ENCODE measurements at regions of chr20 and their contacts with region 1.

Region 1: DNA sequence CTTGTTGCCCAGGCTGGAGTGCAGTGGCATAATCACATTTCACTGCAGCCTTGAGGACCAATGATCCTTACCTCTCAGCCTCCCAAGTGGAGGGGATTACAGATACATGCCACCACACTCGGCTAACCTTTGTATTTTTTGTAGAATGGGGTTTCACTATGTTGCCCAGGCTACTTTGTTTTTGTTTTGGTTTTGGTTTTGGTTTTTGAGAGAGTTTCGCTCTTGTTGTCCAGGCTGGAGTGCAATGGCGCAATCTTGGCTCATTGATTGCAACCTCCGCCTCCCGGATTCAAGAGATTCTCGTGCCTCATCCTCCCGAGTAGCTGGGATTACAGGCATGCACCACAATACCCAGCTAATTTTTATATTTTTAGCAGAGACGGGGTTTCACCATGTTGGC is 105.5 kb downstream of the BMP7 start:
- DNase-seq: no peak
- ATAC-seq: no peak
- H3K4me3 ChIP-seq: no peak overlapping the region
- H3K4me3 Mint-ChIP-seq: no peak overlapping the region
- H3K27ac ChIP-seq: no peak overlapping the region
- H3K27ac Mint-ChIP-seq: no peak overlapping the region
- H3K4me1 ChIP-seq: no peaks in the 10 kb centered on the region
- H3K4me1 Mint-ChIP-seq: no peaks in the 10 kb centered on the region
- H3K27me3 ChIP-seq: no peaks in the 10 kb centered on the region
- H3K27me3 Mint-ChIP-seq: peaks cover 15% of the 10 kb centered on the region
- CTCF ChIP-seq: no peak

Region 2: DNA sequence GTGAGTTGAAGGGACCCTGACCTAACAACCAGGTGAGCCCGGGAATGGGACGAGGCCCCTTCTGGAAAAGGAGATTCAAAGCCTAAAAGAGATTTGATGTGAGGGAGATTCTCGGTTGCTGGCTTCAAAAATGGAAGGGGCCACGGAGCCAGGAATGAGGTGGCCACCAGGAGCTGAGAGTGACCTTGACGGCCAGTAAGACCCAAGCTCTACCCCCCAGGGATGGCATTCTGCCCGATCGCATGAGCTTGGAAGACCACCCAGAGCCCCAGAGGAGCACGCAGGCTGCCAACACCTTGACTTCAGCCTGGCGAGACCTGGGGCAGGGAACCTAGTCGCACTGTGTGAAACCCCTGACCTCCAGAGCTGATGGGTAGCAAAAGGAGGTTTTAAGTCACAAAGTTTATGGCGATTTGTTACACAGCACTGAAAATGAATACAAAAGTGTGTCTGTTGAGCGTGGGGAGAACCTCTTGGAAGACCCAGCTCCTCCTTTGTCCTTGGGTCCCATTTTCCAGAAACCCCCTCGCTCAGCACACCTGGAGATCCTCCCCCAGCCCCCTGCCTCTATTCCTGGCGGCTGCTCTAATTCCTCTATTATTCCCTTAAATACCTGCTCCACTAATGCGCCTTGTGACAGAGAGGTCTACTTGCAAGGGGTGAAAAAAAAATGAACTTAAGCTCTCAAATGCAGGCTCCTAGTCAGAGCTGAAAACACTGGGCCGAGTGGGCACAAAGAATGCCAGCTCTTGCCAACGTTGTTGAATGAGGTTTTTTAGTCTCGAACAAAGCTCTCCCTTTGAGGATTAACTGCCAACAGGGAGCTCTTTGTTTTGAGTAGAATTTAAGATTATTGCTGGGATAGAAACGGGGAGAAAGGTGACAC is 58.2 kb before region 1 on chr20:
- CTCF ChIA-PET with region 1: no interaction called
- POLR2A ChIA-PET with region 1: no interaction called
- intact Hi-C with region 1: no loop called
- DNase-seq: no peak
- ATAC-seq: no peak
- H3K4me3 ChIP-seq: no peak overlapping the region
- H3K4me3 Mint-ChIP-seq: no peak overlapping the region
- H3K27ac ChIP-seq: no peak overlapping the region
- H3K27ac Mint-ChIP-seq: no peak overlapping the region
- H3K4me1 ChIP-seq: no peaks in the 10 kb centered on the region
- H3K4me1 Mint-ChIP-seq: no peaks in the 10 kb centered on the region
- H3K27me3 ChIP-seq: peaks cover 0 to 2% of the 10 kb centered on the region in 2 experiments
- H3K27me3 Mint-ChIP-seq: peaks cover 31% of the 10 kb centered on the region
- CTCF ChIP-seq: no peak

Region 3: DNA sequence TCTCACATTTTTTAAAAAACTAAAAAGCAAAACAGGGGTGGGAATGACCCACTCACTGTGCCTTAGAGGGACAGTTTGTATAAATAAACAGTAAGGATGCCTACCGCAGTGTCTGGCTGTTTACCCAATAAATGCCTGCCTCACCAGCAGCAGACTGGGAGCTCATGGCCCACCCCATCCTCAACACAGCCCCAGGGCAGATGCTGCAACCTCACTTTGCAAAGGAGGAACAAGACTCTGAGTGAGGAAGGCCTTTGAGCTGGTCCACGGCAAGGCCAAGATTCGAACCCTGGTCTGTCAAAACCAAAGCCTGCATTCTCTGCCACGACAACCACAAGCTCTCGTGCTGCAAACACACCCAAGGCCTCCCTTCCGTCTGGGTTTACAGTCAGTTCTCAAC is 27.6 kb after region 1 on chr20:
- CTCF ChIA-PET with region 1: no interaction called
- POLR2A ChIA-PET with region 1: no interaction called
- intact Hi-C with region 1: loop called in 1 of 2 experiments (anchors 1 kb)
- DNase-seq: no peak
- ATAC-seq: no peak
- H3K4me3 ChIP-seq: no peak overlapping the region
- H3K4me3 Mint-ChIP-seq: no peak overlapping the region
- H3K27ac ChIP-seq: no peak overlapping the region
- H3K27ac Mint-ChIP-seq: no peak overlapping the region
- H3K4me1 ChIP-seq: no peaks in the 10 kb centered on the region
- H3K4me1 Mint-ChIP-seq: no peaks in the 10 kb centered on the region
- H3K27me3 ChIP-seq: no peaks in the 10 kb centered on the region
- H3K27me3 Mint-ChIP-seq: peaks cover 8% of the 10 kb centered on the region
- CTCF ChIP-seq: no peak

Measured in CD4-positive, alpha-beta T cell (primary cell).